Endothelial cell of umbilical vein (primary cell): ENCODE measurements at regions of chr6 and their contacts with region 1.

Region 1: GRCh38 chr6:85923013-85923430 is 280.3 kb upstream of the SYNCRIP start:
- DNase-seq: peak; percentile 53
- H3K4me3 ChIP-seq: no peak overlapping the region
- H3K27ac ChIP-seq: no peak overlapping the region
- H3K4me1 ChIP-seq: no peaks in the 10 kb centered on the region
- H3K27me3 ChIP-seq: no peaks in the 10 kb centered on the region
- CTCF ChIP-seq: peak; percentile 36 to 60
- POLR2A ChIP-seq: no peak

Region 2: GRCh38 chr6:85911067-85911466 is 12.0 kb before region 1 on chr6:
- CTCF ChIA-PET with region 1: interaction called, 16 read pairs
- POLR2A ChIA-PET with region 1: no interaction called
- dilution Hi-C with region 1: no loop called
- intact Hi-C with region 1: no loop called
- DNase-seq: no peak
- H3K4me3 ChIP-seq: no peak overlapping the region
- H3K27ac ChIP-seq: no peak overlapping the region
- H3K4me1 ChIP-seq: no peaks in the 10 kb centered on the region
- H3K27me3 ChIP-seq: no peaks in the 10 kb centered on the region
- CTCF ChIP-seq: no peak
- POLR2A ChIP-seq: no peak

Region 3: GRCh38 chr6:86192123-86192522 is 269.1 kb after region 1 on chr6:
- CTCF ChIA-PET with region 1: no interaction called
- POLR2A ChIA-PET with region 1: no interaction called
- dilution Hi-C with region 1: no loop called
- intact Hi-C with region 1: loop called (anchors 1 kb)
- DNase-seq: peak; percentile 15
- H3K4me3 ChIP-seq: no peak overlapping the region
- H3K27ac ChIP-seq: no peak overlapping the region
- H3K4me1 ChIP-seq: no peaks in the 10 kb centered on the region
- H3K27me3 ChIP-seq: no peaks in the 10 kb centered on the region
- CTCF ChIP-seq: peak; percentile 9 to 18
- POLR2A ChIP-seq: no peak

Region 4: GRCh38 chr6:86856937-86857563 is 934.0 kb after region 1 on chr6:
- CTCF ChIA-PET with region 1: interaction called, 11 read pairs
- POLR2A ChIA-PET with region 1: no interaction called
- dilution Hi-C with region 1: no loop called
- intact Hi-C with region 1: loop called (anchors 1 kb)
- DNase-seq: peak; percentile 43
- H3K4me3 ChIP-seq: no peak overlapping the region
- H3K27ac ChIP-seq: no peak overlapping the region
- H3K4me1 ChIP-seq: no peaks in the 10 kb centered on the region
- H3K27me3 ChIP-seq: no peaks in the 10 kb centered on the region
- CTCF ChIP-seq: peak; percentile 39 to 56
- POLR2A ChIP-seq: no peak

Region 5: GRCh38 chr6:86937219-86938079 is 1014.4 kb after region 1 on chr6 and contains the start of gene HTR1E:
- CTCF ChIA-PET with region 1: interaction called, 14 read pairs
- POLR2A ChIA-PET with region 1: no interaction called
- dilution Hi-C with region 1: no loop called
- intact Hi-C with region 1: loop called (anchors 5 kb)
- DNase-seq: peak; percentile 36
- H3K4me3 ChIP-seq: no peak within 1 kb of the TSS
- H3K27ac ChIP-seq: no peak within 1 kb of the TSS
- H3K4me1 ChIP-seq: no peaks in the 10 kb centered on the region
- H3K27me3 ChIP-seq: peaks cover 20 to 29% of the 10 kb centered on the region in 2 experiments
- CTCF ChIP-seq: peak; percentile 44 to 57
- POLR2A ChIP-seq: no peak
- total RNA-seq, gene HTR1E: not detected in 2 replicates

Region 6: DNA sequence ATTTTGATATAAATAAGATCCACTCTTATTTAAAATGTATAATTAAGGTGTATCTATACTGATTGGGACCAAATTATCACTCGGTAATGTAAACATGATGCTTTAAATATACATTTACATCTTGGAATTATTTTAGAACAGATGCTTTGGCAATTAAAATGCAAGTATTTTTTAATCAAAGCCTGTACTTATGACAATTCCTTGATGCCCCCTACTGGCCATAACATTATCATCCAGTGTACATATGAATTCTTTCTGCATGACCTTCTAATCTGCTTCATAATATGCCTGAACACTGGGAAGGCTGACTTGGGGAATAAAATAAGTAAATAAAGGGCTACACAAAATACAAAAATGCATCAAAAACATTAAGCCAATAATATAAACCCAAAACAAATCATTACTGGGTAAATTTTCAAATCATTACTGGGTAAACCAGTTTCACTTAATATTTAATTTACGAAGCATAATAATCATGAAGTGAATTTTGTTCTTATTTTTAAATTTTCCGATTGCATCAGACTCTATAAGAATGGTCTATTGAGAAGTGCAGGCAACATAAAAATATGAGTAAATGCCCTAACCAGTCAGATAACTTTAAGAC is 1106.8 kb after region 1 on chr6:
- CTCF ChIA-PET with region 1: interaction called, 6 read pairs
- POLR2A ChIA-PET with region 1: no interaction called
- dilution Hi-C with region 1: no loop called
- intact Hi-C with region 1: loop called (anchors 1 kb)
- DNase-seq: peak; percentile 53
- H3K4me3 ChIP-seq: no peak overlapping the region
- H3K27ac ChIP-seq: no peak overlapping the region
- H3K4me1 ChIP-seq: no peaks in the 10 kb centered on the region
- H3K27me3 ChIP-seq: no peaks in the 10 kb centered on the region
- CTCF ChIP-seq: peak; percentile 35 to 51
- POLR2A ChIP-seq: no peak